ENCODE measurements at regions of chr11 and their contacts with region 1.

Region 1: DNA sequence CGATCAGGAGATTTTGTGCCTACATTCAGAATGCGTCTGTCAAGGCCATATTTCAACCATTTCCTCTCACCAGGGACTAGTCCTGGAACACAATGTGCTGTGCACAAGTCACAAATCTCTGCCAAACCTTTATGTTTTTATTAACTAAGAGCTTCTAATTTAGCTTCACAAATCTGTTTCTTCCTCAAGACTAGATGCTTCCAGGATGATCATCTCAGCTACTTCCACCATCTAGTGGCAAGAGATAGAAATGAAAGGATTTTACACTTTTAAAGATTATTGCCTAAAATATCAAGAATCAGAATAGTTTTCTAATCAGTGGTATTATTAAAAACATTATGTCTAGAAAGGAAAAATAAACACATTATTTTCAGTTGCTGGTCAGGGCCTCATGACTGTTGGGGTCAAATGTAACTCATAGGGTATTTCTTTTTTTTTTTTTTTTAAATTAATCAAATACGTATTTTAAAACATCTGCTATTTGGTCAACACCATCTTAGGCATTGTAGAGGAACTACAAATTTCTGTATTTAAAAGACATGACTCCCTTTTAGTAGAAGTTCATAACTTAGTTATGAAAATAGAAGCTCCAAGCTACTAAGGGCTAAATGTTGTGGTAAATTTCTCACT is 1102.6 kb downstream of the DLG2 start:
- DNase-seq: peak; percentile 15
- CTCF ChIP-seq: peak; percentile 33

Region 2: DNA sequence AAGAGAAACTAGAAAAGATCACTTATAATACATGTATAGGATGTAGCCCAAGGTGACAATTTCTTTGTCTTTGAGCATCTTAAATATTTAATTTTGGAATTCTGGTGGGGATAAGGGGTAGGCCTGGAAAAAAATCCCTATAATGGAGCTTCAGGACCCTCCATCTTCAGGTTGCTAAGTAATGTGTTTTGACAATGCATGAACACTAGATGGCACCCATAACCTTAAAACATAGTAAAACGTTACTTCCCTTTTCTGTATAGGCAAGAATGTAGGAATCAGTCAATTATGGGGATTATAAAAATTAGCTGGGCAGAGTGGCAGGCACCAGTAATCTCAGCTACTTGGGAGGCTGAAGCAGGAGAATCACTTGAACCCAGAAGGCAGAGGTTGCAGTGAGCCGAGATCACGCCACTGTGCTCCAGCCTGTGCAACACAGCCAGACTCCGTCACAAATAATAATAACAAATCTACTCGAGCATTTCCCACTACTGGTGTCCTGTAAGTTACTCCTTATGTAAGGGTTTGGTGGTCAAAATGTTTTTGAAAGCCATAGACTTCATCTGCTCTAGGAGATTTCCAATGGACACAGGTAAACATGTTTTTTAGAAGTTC is 696.5 kb before region 1 on chr11:
- CTCF ChIA-PET with region 1: interaction called, 12 read pairs
- POLR2A ChIA-PET with region 1: no interaction called
- DNase-seq: peak; percentile 33
- CTCF ChIP-seq: peak; percentile 64